Left cardiac atrium (tissue), 4 donors: ENCODE measurements at regions of chr20 and their contacts with region 1.

Region 1: DNA sequence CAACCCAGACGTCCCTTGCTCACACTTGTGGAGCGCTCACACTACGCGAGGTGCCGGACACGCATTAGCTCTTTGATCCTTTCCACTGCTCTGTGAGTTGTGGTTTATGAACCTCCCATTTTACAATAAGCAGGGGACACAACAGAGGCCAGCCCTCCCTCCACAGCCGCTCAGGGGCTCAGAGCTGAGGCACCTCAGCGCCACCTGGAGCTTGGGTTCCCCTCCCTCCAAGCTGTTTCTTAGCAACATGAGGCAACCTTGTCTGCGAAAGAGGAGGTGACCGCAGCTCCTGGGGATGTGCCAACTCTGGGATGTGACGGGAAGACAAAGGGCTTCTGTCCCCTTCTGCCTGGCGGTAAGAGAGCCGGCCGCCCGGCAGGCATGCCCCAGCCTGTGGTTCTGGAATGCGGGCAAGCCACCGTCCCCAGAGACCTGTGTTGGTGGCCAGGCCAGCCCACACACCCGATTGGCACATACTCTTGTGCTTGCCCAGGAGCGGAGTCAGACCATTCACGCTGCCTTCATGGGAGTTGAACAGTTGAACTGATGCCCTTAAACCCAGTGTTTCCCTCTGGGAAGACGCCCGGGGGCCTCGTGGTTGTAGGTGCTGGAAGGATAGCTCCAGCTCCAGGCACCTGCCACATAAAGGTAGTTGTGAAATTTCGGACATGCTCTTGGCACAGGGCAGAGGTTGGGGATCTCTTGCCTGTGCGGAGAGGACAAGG is 44.5 kb downstream of the RBM38 start:
- DNase-seq: peak; percentile 72
- ATAC-seq: peak; percentile 8 to 13

Region 2: DNA sequence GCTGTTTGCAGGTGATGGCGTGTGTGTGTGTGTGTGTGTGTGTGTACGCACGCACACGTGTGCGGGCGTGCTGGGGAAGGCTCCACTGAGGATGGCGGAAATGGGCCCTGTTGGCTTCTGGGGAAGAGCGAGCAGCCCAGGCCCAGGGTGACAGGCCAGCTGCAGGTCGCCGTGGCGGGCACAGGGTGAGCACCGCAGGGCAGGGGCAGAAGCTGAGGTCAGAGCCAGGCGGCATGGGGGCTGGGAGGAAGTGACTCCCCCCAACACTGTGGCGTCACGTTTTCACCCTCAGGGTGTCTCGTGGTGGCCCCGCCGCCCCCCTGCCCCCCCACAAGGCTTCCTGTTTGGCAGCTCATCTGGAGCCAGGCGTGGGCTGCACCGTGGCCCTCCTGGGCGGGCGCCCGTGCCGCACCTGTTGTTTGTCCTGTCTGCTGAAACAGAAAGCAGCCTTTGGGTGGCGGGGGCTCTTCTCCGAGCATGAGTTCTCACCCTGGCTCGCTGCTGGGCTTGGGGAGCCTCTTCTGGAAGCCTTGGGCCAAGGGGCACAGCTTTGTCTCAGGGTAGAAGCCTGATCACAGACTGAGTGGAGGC is 37.3 kb before region 1 on chr20:
- intact Hi-C with region 1: loop called (anchors 5 kb)
- DNase-seq: peak; percentile 57
- ATAC-seq: peak; percentile 14 to 25

Region 3: GRCh38 chr20:57450419-57450818 is 14.8 kb after region 1 on chr20:
- intact Hi-C with region 1: no loop called
- DNase-seq: peak; percentile 62
- ATAC-seq: peak; percentile 53 to 64

Region 4: GRCh38 chr20:57464715-57465211 is 29.1 kb after region 1 on chr20:
- intact Hi-C with region 1: no loop called
- DNase-seq: no peak
- ATAC-seq: no peak